Dorsolateral prefrontal cortex (tissue), 120 donors: ENCODE measurements at regions of chr1 and their contacts with region 1.

Region 1: GRCh38 chr1:60581455-60582220 is 500.7 kb upstream of the NFIA start:
- DNase-seq: no peak
- H3K4me3 ChIP-seq: no peak overlapping the region
- H3K27ac ChIP-seq: no peak overlapping the region
- H3K27me3 ChIP-seq: no peaks in the 10 kb centered on the region
- CTCF ChIP-seq: no peak

Region 2: GRCh38 chr1:60436186-60436585 is 145.5 kb before region 1 on chr1:
- intact Hi-C with region 1: no loop called
- DNase-seq: peak in 1 of 10 donors; percentile 11
- H3K4me3 ChIP-seq: no peak overlapping the region
- H3K27ac ChIP-seq: peak overlapping the region in 3 of 59 donors; percentile 17 to 52 (median 32)
- H3K27me3 ChIP-seq: no peaks in the 10 kb centered on the region
- CTCF ChIP-seq: no peak

Region 3: GRCh38 chr1:60621368-60621851 is 39.8 kb after region 1 on chr1:
- intact Hi-C with region 1: loop called in 1 of 2 experiments (anchors 5 kb)
- DNase-seq: peak in 3 of 10 donors; percentile 26 to 36 (median 31)
- H3K4me3 ChIP-seq: peak overlapping the region in 54 of 59 donors; percentile 1 to 60 (median 34)
- H3K27ac ChIP-seq: peak overlapping the region in 47 of 59 donors; percentile 4 to 77 (median 58)
- H3K27me3 ChIP-seq: no peaks in the 10 kb centered on the region
- CTCF ChIP-seq: peak in 2 of 56 donors; percentile 9 to 10

Region 4: DNA sequence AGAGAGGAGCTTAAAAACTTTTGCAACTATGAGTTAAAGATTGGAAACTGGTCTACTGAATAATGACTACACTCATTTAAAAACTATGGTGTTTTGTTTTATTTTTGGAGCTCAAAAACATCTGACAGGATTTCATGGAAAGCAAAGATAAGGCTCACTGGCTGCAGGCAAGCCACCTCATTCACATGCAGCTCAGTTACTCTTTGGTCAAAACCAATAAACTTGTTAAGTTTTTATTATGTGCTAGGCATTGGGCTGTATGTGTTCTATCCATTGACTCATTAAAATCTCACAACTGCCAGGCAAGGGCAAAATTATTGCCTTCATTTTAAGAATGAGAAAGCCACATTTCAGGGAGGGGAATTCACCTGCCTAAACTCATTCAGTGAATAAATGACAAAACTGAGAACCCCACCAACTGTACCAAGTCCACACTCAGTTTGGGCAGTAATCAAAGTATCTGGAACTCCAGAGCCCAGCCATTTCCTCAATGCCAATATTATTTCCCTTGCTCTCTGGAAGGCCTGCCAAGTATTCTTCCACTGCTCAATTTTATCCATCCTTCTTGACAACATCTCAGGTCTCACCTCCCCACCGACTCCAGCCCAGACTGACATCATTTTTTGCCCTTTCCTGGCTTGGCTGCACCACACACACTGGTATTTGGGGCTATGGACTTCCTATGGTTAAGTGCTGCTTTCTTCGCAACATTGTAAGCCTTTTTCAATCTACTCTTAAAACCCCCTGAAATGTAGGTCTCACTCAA is 99.6 kb after region 1 on chr1:
- intact Hi-C with region 1: no loop called
- DNase-seq: no peak
- H3K4me3 ChIP-seq: no peak overlapping the region
- H3K27ac ChIP-seq: no peak overlapping the region
- H3K27me3 ChIP-seq: peaks cover 0 to 3% (median 0%) of the 10 kb centered on the region in 45 donors
- CTCF ChIP-seq: no peak